GM12878 (cell line): ENCODE measurements at regions of chr9 and their contacts with region 1.

Region 1: GRCh38 chr9:124658165-124659017 is 112.7 kb downstream of the NR6A1 start:
- DNase-seq: peak; percentile 93
- ATAC-seq: peak; percentile 91
- H3K4me3 ChIP-seq: peak overlapping the region; percentile 75
- H3K27ac ChIP-seq: peak overlapping the region; percentile 96
- H3K4me1 ChIP-seq: 0 out of 2 replicates have a peak, but pooled peaks cover 3% of the 10 kb centered on the region
- H3K27me3 ChIP-seq: no peaks in the 10 kb centered on the region
- CTCF ChIP-seq: no peak
- EP300 ChIP-seq: no peak
- POLR2A ChIP-seq: peak; percentile 95
- RAD21 ChIP-seq: no peak

Region 2: DNA sequence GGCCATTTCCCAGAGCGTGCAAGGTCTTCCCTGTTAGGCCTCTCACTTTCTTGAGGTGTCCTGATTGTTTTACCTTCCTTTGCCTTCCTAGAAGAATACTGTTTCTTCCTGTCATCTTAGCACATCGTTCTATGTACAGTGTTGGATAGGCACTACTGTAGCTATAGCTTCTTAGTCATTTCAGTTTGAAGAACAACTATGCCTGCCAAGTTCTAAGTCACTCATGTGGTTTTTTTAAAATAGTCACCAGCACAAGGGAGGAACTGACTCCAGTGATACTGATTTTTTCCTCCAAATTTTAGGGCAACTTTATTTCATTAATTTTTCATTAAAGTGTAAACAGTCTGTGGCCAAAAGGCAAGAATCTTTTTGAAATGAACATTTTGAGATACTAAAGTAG is 28.8 kb before region 1 on chr9:
- CTCF ChIA-PET with region 1: interaction called, 90 read pairs
- POLR2A ChIA-PET with region 1: interaction called, 146 read pairs
- RAD21 ChIA-PET with region 1: interaction called, 172 read pairs
- SMC1A ChIA-PET with region 1: interaction called, 160 read pairs
- in situ Hi-C with region 1: no loop called
- intact Hi-C with region 1: no loop called
- DNase-seq: no peak
- ATAC-seq: peak; percentile 46; the same call in 2 of the 3 replicates
- H3K4me3 ChIP-seq: no peak overlapping the region
- H3K27ac ChIP-seq: no peak overlapping the region
- H3K4me1 ChIP-seq: no peaks in the 10 kb centered on the region
- H3K27me3 ChIP-seq: no peaks in the 10 kb centered on the region
- CTCF ChIP-seq: no peak
- EP300 ChIP-seq: no peak
- POLR2A ChIP-seq: no peak
- RAD21 ChIP-seq: no peak

Region 3: GRCh38 chr9:124635285-124635684 is 23.1 kb before region 1 on chr9:
- CTCF ChIA-PET with region 1: interaction called, 6 read pairs
- POLR2A ChIA-PET with region 1: interaction called, 11 read pairs
- RAD21 ChIA-PET with region 1: interaction called, 3 read pairs
- SMC1A ChIA-PET with region 1: interaction called, 29 read pairs
- in situ Hi-C with region 1: no loop called
- intact Hi-C with region 1: no loop called
- DNase-seq: no peak
- ATAC-seq: no peak
- H3K4me3 ChIP-seq: no peak overlapping the region
- H3K27ac ChIP-seq: no peak overlapping the region
- H3K4me1 ChIP-seq: no peaks in the 10 kb centered on the region
- H3K27me3 ChIP-seq: no peaks in the 10 kb centered on the region
- CTCF ChIP-seq: no peak
- EP300 ChIP-seq: no peak
- POLR2A ChIP-seq: no peak
- RAD21 ChIP-seq: no peak

Region 4: DNA sequence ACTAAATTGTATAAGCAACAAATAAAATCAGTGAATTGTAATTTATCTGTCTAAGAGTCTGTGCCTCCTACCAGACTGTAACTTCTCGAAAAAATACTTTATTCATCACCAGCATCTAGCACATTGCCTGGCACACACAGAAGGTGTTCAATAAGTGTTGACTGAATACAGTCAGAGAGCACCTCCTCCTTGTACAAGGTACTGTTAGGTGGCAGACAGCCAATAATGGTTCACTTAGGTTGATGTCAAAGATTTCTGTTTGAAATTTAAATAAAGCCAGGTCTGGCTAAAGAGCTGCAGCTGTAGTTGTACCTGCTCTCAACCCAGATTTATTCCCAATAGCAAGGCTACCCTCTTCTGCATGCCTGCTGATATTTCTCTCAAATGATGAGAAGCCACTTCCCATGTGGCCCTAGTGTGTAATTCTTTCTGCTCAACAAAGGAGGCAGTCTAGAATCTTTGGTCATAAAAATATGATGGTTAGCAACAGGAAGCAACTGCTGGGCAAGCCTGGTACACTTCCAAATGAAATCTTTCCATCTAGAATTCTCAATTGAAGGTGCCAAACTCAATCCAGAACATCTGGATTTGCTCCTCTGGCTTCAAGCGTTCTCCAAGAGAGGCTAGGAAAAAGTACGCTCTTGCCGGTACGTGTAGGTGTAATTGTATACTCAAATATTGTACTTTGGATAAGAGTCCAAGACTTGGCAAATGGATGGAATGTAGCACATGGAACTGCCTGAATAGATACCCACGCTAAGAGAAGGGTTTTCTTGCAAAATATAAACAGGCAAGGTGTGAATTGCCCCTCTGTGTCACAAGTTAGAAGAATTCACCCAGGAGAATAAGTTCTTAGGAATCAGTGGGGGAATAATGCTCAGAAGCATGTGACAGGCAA is 17.1 kb after region 1 on chr9:
- CTCF ChIA-PET with region 1: interaction called, 7 read pairs
- POLR2A ChIA-PET with region 1: interaction called, 35 read pairs
- RAD21 ChIA-PET with region 1: interaction called, 8 read pairs
- SMC1A ChIA-PET with region 1: interaction called, 19 read pairs
- in situ Hi-C with region 1: no loop called
- intact Hi-C with region 1: no loop called
- DNase-seq: no peak
- ATAC-seq: peak; percentile 31; the same call in 1 of the 3 replicates
- H3K4me3 ChIP-seq: no peak overlapping the region
- H3K27ac ChIP-seq: no peak overlapping the region
- H3K4me1 ChIP-seq: peaks cover 5% of the 10 kb centered on the region; the same call in 1 of the 2 replicates
- H3K27me3 ChIP-seq: no peaks in the 10 kb centered on the region
- CTCF ChIP-seq: 0 out of 6 replicates have a peak, but pooled peaks of 2 of the 3 experiments have one; percentile 1 to 9
- EP300 ChIP-seq: no peak
- POLR2A ChIP-seq: no peak
- RAD21 ChIP-seq: no peak

Region 5: DNA sequence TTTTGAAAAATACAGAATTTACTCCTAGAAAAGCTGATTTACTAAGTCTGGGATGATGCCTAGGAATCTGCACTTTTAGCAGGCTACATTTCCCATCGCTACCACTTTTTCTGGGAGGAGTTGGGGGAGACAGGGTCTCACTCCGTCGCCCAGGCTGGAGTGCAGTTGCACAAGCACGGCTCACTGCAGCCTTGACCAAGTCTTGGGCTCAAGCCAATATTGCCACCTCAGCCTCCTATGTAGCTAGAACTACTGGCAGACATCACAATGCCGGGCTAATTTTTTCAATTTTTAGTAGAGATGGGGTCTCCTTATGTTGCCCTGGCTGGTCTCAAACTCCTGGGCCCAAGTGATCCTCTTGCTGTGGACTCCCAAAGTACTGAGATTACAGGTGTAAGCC is 26.8 kb after region 1 on chr9:
- CTCF ChIA-PET with region 1: interaction called, 6 read pairs
- POLR2A ChIA-PET with region 1: interaction called, 35 read pairs
- RAD21 ChIA-PET with region 1: no interaction called
- SMC1A ChIA-PET with region 1: interaction called, 11 read pairs
- in situ Hi-C with region 1: no loop called
- intact Hi-C with region 1: no loop called
- DNase-seq: no peak
- ATAC-seq: no peak
- H3K4me3 ChIP-seq: no peak overlapping the region
- H3K27ac ChIP-seq: no peak overlapping the region
- H3K4me1 ChIP-seq: peaks cover 5% of the 10 kb centered on the region
- H3K27me3 ChIP-seq: no peaks in the 10 kb centered on the region
- CTCF ChIP-seq: no peak
- EP300 ChIP-seq: no peak
- POLR2A ChIP-seq: no peak
- RAD21 ChIP-seq: no peak